ENCODE measurements at regions of chr15 and their contacts with region 1.

Region 1: DNA sequence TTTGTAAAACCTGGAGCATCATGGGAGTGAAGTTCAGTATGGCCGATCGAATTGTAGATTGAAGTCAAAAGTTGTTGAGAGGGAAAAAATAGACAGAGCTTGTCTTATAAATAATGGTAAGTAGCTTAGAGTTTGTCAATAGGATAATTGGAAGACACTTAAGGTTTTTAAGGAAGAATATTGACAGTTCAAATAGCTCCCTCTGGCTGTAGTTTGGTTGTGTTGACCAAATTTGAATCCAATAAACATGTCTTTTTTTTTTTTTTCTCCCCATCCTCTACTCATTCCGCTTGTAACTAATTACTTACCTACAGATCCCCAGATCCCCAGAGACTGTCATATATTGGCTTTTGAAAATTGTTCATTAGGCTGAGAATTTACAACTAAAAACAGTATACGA is 677.0 kb downstream of the AGBL1 start:
- DNase-seq: no peak
- ATAC-seq: no peak

Region 2: GRCh38 chr15:86231864-86232721 is 524.6 kb before region 1 on chr15:
- intact Hi-C with region 1: loop called (anchors 10 kb)
- DNase-seq: no peak
- ATAC-seq: peak; percentile 70

Region 3: GRCh38 chr15:86624261-86625036 is 132.2 kb before region 1 on chr15:
- intact Hi-C with region 1: no loop called
- DNase-seq: peak; percentile 74
- ATAC-seq: peak; percentile 99

Region 4: DNA sequence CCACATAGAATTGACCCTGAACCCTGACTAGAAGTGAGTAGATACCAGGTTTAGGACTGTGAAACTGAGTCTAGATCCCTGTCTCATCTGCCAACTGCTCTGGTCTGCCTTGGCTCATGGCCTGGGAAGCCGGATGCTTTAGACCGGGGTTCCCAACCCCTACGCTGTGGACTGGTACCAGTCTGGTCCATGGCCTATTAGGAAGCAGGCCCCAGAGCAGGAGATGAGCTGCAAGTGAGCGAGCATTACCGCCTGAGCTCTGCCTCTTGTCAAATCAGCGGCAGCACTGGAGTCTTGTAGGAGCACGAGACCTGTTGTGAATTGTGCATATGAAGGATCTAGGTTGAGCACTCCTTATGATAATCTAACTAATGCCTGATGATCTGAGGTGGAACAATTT is 57.2 kb after region 1 on chr15:
- intact Hi-C with region 1: no loop called
- DNase-seq: no peak
- ATAC-seq: no peak

Region 5: GRCh38 chr15:87489902-87490665 is 733.4 kb after region 1 on chr15:
- intact Hi-C with region 1: loop called (anchors 10 kb)
- DNase-seq: no peak
- ATAC-seq: peak; percentile 26

Measured in Right ventricle myocardium inferior (tissue), 1 donor.